ENCODE measurements at regions of chrX and their contacts with region 1.

Region 1: GRCh38 chrX:66110112-66110511 is 53.9 kb upstream of the HEPH start:
- DNase-seq: no peak
- H3K4me3 Mint-ChIP-seq: no peak overlapping the region
- H3K27ac Mint-ChIP-seq: no peak overlapping the region
- H3K4me1 Mint-ChIP-seq: peaks cover 8% of the 10 kb centered on the region
- H3K27me3 Mint-ChIP-seq: no peaks in the 10 kb centered on the region

Region 2: GRCh38 chrX:65994519-65995506 is 115.3 kb before region 1 on chrX:
- intact Hi-C with region 1: loop called (anchors 2 kb)
- DNase-seq: no peak
- H3K4me3 Mint-ChIP-seq: no peak overlapping the region
- H3K27ac Mint-ChIP-seq: peak overlapping the region; percentile 70
- H3K4me1 Mint-ChIP-seq: peaks cover 34% of the 10 kb centered on the region
- H3K27me3 Mint-ChIP-seq: no peaks in the 10 kb centered on the region

Region 3: GRCh38 chrX:66030505-66031317 is 79.4 kb before region 1 on chrX:
- intact Hi-C with region 1: loop called (anchors 5 kb)
- DNase-seq: no peak
- H3K4me3 Mint-ChIP-seq: no peak overlapping the region
- H3K27ac Mint-ChIP-seq: no peak overlapping the region
- H3K4me1 Mint-ChIP-seq: peaks cover 6% of the 10 kb centered on the region
- H3K27me3 Mint-ChIP-seq: no peaks in the 10 kb centered on the region

Measured in activated T-helper 1 cell treated with anti-CD3 and anti-CD28 coated beads, Interleukin-12 subunit alpha, Interleukin-12 subunit beta, Interleukin-2, Interleukin-4 antibody, amounts not matched to agents 30 ng/mL and 10 ng/mL and 1 ng/mL, durations not matched to agents 14 hours and 24 hours and 36 hours (primary cell).